Psoas muscle (tissue), 8 donors: ENCODE measurements at regions of chr11 and their contacts with region 1.

Region 1: GRCh38 chr11:13955971-13956421 is 6.5 kb upstream of the SPON1 start:
- DNase-seq: peak in 1 of 2 donors; percentile 55
- ATAC-seq: peak in 3 of 4 donors; percentile 66 to 68 (median 68)
- H3K4me3 ChIP-seq: no peak overlapping the region
- H3K27ac ChIP-seq: no peak overlapping the region
- H3K4me1 ChIP-seq: no peaks in the 10 kb centered on the region
- H3K27me3 ChIP-seq: peaks cover 0 to 56% (median 0%) of the 10 kb centered on the region in 3 donors
- CTCF ChIP-seq: peak; percentile 67

Region 2: DNA sequence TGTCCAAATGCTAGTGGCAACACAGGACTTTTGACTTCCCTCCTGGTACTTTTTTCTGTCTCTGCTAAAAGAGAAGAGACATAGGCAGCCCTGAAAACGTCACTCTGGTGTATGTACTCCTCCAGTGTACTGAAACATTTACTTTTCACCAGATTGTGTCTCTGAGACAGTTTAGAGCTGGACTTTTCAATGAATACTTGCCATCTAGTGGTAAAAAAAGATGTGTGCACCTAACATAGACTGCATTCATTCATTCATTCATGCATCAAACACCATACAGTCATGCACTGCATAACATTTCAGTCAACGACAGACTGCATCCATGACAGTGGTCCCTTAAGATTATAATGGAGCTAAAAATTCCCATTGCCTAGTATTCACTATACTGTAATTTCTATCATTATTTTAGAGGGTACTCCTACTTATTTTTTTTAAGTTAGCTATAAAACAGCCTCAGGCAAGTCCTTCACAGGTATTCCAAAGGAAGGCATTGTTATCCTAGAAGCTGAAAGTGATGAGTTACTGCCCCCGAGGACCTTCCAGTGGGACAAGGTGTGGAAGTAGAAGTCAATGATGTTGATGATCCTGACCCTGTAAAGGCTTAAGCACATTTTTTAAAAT is 192.8 kb after region 1 on chr11:
- intact Hi-C with region 1: loop called in 1 of 2 experiments (anchors 10 kb)
- DNase-seq: no peak
- ATAC-seq: peak in 3 of 4 donors; percentile 23 to 57 (median 40)
- H3K4me3 ChIP-seq: no peak overlapping the region
- H3K27ac ChIP-seq: no peak overlapping the region
- H3K4me1 ChIP-seq: no peaks in the 10 kb centered on the region
- H3K27me3 ChIP-seq: no peaks in the 10 kb centered on the region
- CTCF ChIP-seq: peak; percentile 32

Region 3: DNA sequence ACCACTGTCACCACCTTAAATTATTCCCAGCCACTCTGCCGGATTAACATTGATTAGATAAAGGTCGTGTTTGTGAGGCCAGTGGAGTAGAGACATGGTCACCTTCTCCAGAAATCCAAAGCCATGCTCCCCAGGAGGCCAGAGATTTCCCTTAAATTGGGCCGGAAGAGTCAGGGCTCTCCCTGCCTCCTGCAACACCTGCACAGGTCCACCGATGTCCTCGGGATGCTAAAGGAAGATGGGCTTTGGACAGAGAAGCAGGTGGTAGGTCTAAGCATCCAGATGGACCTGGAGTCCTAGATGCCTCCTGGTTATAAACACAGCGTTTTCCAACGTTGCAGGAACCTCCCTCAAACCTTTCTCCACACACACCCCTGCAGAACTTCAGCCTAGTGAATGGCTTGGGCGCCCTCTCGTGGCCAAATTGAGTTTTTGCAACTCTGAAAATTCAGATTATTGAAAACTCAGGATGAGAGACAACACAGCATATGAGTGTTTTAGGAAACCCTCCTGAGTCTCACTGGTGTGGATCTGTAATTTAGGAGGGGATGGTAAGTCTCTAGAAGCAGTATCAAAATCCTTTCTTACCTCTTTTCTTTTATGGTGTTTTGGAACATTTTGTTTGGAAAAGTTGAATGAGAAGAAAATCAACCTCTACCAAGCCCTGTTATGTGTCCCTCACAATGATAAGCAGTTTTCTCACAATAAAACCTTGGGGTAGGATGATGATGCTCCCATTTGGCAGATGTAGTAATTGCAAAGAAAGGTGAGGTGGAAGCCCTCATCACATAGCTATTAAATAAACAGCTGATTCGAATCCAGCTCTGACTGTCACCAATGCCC is 293.3 kb after region 1 on chr11:
- intact Hi-C with region 1: loop called (anchors 2 kb)
- DNase-seq: peak; percentile 56 to 75
- ATAC-seq: peak in 3 of 4 donors; percentile 46 to 68 (median 55)
- H3K4me3 ChIP-seq: no peak overlapping the region
- H3K27ac ChIP-seq: no peak overlapping the region
- H3K4me1 ChIP-seq: no peaks in the 10 kb centered on the region
- H3K27me3 ChIP-seq: peaks cover 0 to 10% (median 0%) of the 10 kb centered on the region in 3 donors
- CTCF ChIP-seq: peak; percentile 81